ENCODE measurements at regions of chr2 and their contacts with region 1.

Region 1: DNA sequence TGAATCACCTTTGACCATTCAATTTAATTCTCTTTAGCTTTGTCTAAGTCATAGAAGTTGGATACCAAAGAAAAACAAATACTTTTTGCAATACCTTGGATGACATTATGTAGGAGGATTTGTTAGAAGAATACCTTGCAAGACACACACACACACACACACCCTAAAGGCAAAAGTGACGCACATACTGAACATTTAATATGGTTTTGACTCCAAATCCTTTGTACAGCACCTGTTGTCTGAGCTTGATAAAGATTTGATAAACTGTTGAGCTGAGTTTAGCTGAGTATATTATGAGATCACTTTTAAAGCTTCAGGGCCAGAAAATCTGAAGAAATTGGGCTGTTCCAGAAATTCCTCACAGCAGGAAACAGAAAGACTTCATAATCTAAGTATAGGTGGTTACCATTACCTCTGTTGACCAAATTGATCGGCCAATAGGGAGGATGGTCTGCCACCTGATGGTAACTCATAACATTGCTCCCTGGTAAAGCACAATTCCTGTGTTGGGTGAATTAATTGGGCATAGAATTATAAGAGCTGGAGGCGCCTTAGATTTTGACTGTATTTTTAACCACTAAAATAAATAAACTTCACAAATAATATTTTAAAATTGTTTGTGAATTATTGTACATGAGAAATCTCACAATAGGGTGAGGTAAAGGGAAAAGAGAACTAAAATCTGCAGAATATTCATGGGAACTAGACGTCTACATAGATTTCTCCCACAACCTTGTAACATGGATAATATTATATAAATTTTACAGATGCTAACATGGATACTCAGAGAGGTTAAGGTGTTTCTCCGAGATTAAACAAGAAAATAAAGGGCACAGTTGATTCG is 21.9 kb upstream of the RPIA start:
- DNase-seq: peak; percentile 62
- H3K4me3 Mint-ChIP-seq: no peak overlapping the region
- H3K27ac Mint-ChIP-seq: no peak overlapping the region
- H3K4me1 Mint-ChIP-seq: no peaks in the 10 kb centered on the region
- H3K27me3 Mint-ChIP-seq: no peaks in the 10 kb centered on the region
- CTCF ChIP-seq: peak; percentile 65

Region 2: GRCh38 chr2:88059979-88060906 is 609.4 kb before region 1 on chr2:
- CTCF ChIA-PET with region 1: interaction called, 4 read pairs
- POLR2A ChIA-PET with region 1: no interaction called
- intact Hi-C with region 1: loop called (anchors 5 kb)
- DNase-seq: peak; percentile 55
- H3K4me3 Mint-ChIP-seq: no peak overlapping the region
- H3K27ac Mint-ChIP-seq: no peak overlapping the region
- H3K4me1 Mint-ChIP-seq: peaks cover 6% of the 10 kb centered on the region
- H3K27me3 Mint-ChIP-seq: no peaks in the 10 kb centered on the region
- CTCF ChIP-seq: peak; percentile 82

Region 3: DNA sequence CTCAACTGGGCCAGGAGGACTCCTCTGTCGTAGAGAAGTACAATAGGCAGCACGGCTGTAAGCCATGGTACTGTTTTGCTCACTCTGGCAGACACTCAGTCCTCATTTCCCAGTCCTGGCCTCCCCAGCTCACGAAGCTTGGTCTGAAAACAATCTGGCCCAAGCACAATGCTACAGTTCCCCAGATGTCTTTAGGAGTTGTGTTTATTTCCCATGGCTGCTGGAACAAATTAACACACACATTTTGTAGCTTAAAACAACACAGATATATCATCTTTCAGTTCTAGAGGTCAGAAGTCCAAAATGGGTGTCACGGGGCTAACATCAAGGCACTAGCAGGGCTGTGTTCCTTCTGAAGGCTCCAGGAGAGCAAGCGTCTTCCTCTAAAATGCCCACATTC is 554.7 kb before region 1 on chr2:
- CTCF ChIA-PET with region 1: no interaction called
- POLR2A ChIA-PET with region 1: no interaction called
- intact Hi-C with region 1: no loop called
- DNase-seq: no peak
- H3K4me3 Mint-ChIP-seq: no peak overlapping the region
- H3K27ac Mint-ChIP-seq: no peak overlapping the region
- H3K4me1 Mint-ChIP-seq: no peaks in the 10 kb centered on the region
- H3K27me3 Mint-ChIP-seq: peaks cover 28% of the 10 kb centered on the region
- CTCF ChIP-seq: no peak

Region 4: GRCh38 chr2:88489200-88489599 is 180.4 kb before region 1 on chr2:
- CTCF ChIA-PET with region 1: interaction called, 4 read pairs
- POLR2A ChIA-PET with region 1: interaction called, 3 read pairs
- intact Hi-C with region 1: loop called (anchors 2 kb)
- DNase-seq: peak; percentile 26
- H3K4me3 Mint-ChIP-seq: no peak overlapping the region
- H3K27ac Mint-ChIP-seq: no peak overlapping the region
- H3K4me1 Mint-ChIP-seq: no peaks in the 10 kb centered on the region
- H3K27me3 Mint-ChIP-seq: no peaks in the 10 kb centered on the region
- CTCF ChIP-seq: no peak

Region 5: DNA sequence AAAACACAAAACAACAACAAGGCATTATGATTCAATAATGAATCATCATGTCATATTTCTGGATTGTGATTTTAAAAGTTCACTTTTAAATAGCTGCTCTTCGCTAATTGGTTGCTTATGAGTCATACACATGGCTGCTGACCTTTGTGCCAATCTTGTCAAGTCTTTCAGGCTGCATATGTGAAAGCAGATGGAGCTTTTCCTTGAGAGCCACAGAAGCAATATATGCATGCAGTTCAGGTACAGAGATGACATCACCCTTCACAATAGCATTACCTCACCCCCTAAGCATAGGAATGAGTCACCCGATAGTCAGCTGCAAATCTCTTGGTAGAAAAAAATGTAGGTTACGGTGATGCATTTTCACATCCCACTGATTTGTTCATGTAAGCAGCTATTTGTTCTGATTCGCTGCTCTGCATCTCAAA is 69.5 kb before region 1 on chr2:
- CTCF ChIA-PET with region 1: interaction called, 424 read pairs
- POLR2A ChIA-PET with region 1: interaction called, 8 read pairs
- intact Hi-C with region 1: no loop called
- DNase-seq: peak; percentile 93
- H3K4me3 Mint-ChIP-seq: no peak overlapping the region
- H3K27ac Mint-ChIP-seq: no peak overlapping the region
- H3K4me1 Mint-ChIP-seq: peaks cover 15% of the 10 kb centered on the region
- H3K27me3 Mint-ChIP-seq: no peaks in the 10 kb centered on the region
- CTCF ChIP-seq: no peak

Region 6: GRCh38 chr2:88632569-88632968 is 37.0 kb before region 1 on chr2:
- CTCF ChIA-PET with region 1: interaction called, 29 read pairs
- POLR2A ChIA-PET with region 1: interaction called, 20 read pairs
- intact Hi-C with region 1: loop called (anchors 2 kb)
- DNase-seq: no peak
- H3K4me3 Mint-ChIP-seq: no peak overlapping the region
- H3K27ac Mint-ChIP-seq: no peak overlapping the region
- H3K4me1 Mint-ChIP-seq: no peaks in the 10 kb centered on the region
- H3K27me3 Mint-ChIP-seq: no peaks in the 10 kb centered on the region
- CTCF ChIP-seq: no peak

Region 7: GRCh38 chr2:88680266-88680902 is 10.8 kb after region 1 on chr2:
- CTCF ChIA-PET with region 1: interaction called, 20 read pairs
- POLR2A ChIA-PET with region 1: interaction called, 3 read pairs
- intact Hi-C with region 1: no loop called
- DNase-seq: no peak
- H3K4me3 Mint-ChIP-seq: no peak overlapping the region
- H3K27ac Mint-ChIP-seq: no peak overlapping the region
- H3K4me1 Mint-ChIP-seq: no peaks in the 10 kb centered on the region
- H3K27me3 Mint-ChIP-seq: peaks cover 14% of the 10 kb centered on the region
- CTCF ChIP-seq: no peak

Region 8: GRCh38 chr2:88838165-88838635 is 168.6 kb after region 1 on chr2:
- CTCF ChIA-PET with region 1: no interaction called
- POLR2A ChIA-PET with region 1: no interaction called
- intact Hi-C with region 1: no loop called
- DNase-seq: no peak
- H3K4me3 Mint-ChIP-seq: no peak overlapping the region
- H3K27ac Mint-ChIP-seq: no peak overlapping the region
- H3K4me1 Mint-ChIP-seq: no peaks in the 10 kb centered on the region
- H3K27me3 Mint-ChIP-seq: peaks cover 53% of the 10 kb centered on the region
- CTCF ChIP-seq: no peak

Region 9: GRCh38 chr2:88874063-88874657 is 204.6 kb after region 1 on chr2:
- CTCF ChIA-PET with region 1: no interaction called
- POLR2A ChIA-PET with region 1: no interaction called
- intact Hi-C with region 1: no loop called
- DNase-seq: peak; percentile 73
- H3K4me3 Mint-ChIP-seq: no peak overlapping the region
- H3K27ac Mint-ChIP-seq: no peak overlapping the region
- H3K4me1 Mint-ChIP-seq: no peaks in the 10 kb centered on the region
- H3K27me3 Mint-ChIP-seq: peaks cover 86% of the 10 kb centered on the region
- CTCF ChIP-seq: peak; percentile 77

Measured in MCF 10A (cell line).